ENCODE measurements at regions of chr7 and their contacts with region 1.

Region 1: GRCh38 chr7:105013221-105013815 is 687 bp upstream of the KMT2E start:
- DNase-seq: peak; percentile 95 to 97 (median 97)
- H3K4me3 ChIP-seq: peak overlapping the region; percentile 87 to 99
- H3K4me3 Mint-ChIP-seq: peak overlapping the region; percentile 94 to 100 (median 98)
- H3K27ac ChIP-seq: peak overlapping the region; percentile 100
- H3K27ac Mint-ChIP-seq: peak overlapping the region; percentile 99 to 100 (median 100)
- H3K4me1 ChIP-seq: peaks cover 56% of the 10 kb centered on the region
- H3K4me1 Mint-ChIP-seq: peaks cover 22 to 90% (median 38%) of the 10 kb centered on the region in 4 donors
- H3K27me3 ChIP-seq: no peaks in the 10 kb centered on the region
- H3K27me3 Mint-ChIP-seq: peaks cover 0 to 9% of the 10 kb centered on the region in 2 donors

Region 2: GRCh38 chr7:104943502-104944343 is 69.6 kb before region 1 on chr7:
- CTCF ChIA-PET with region 1: interaction called, 4 read pairs
- POLR2A ChIA-PET with region 1: interaction called, 118 read pairs
- intact Hi-C with region 1: loop called (anchors 1 kb)
- DNase-seq: peak; percentile 75 to 92 (median 81)
- H3K4me3 ChIP-seq: peak overlapping the region; percentile 1 to 15
- H3K4me3 Mint-ChIP-seq: peak overlapping the region; percentile 82 to 92 (median 88)
- H3K27ac ChIP-seq: peak overlapping the region; percentile 94
- H3K27ac Mint-ChIP-seq: peak overlapping the region; percentile 100
- H3K4me1 ChIP-seq: peaks cover 59% of the 10 kb centered on the region
- H3K4me1 Mint-ChIP-seq: peaks cover 45 to 71% (median 58%) of the 10 kb centered on the region in 4 donors
- H3K27me3 ChIP-seq: no peaks in the 10 kb centered on the region
- H3K27me3 Mint-ChIP-seq: peaks cover 0 to 1% of the 10 kb centered on the region in 2 donors

Region 3: GRCh38 chr7:105003275-105003674 is 10.0 kb before region 1 on chr7:
- CTCF ChIA-PET with region 1: interaction called, 8 read pairs
- POLR2A ChIA-PET with region 1: interaction called, 44 read pairs
- intact Hi-C with region 1: no loop called
- DNase-seq: peak in 1 of 5 donors; percentile 69
- H3K4me3 ChIP-seq: no peak overlapping the region
- H3K4me3 Mint-ChIP-seq: peak overlapping the region; percentile 53 to 84 (median 64)
- H3K27ac ChIP-seq: peak overlapping the region; percentile 33
- H3K27ac Mint-ChIP-seq: peak overlapping the region; percentile 80 to 93 (median 90)
- H3K4me1 ChIP-seq: peaks cover 98% of the 10 kb centered on the region
- H3K4me1 Mint-ChIP-seq: peaks cover 62 to 95% (median 78%) of the 10 kb centered on the region in 4 donors
- H3K27me3 ChIP-seq: no peaks in the 10 kb centered on the region
- H3K27me3 Mint-ChIP-seq: no peaks in the 10 kb centered on the region

Region 4: DNA sequence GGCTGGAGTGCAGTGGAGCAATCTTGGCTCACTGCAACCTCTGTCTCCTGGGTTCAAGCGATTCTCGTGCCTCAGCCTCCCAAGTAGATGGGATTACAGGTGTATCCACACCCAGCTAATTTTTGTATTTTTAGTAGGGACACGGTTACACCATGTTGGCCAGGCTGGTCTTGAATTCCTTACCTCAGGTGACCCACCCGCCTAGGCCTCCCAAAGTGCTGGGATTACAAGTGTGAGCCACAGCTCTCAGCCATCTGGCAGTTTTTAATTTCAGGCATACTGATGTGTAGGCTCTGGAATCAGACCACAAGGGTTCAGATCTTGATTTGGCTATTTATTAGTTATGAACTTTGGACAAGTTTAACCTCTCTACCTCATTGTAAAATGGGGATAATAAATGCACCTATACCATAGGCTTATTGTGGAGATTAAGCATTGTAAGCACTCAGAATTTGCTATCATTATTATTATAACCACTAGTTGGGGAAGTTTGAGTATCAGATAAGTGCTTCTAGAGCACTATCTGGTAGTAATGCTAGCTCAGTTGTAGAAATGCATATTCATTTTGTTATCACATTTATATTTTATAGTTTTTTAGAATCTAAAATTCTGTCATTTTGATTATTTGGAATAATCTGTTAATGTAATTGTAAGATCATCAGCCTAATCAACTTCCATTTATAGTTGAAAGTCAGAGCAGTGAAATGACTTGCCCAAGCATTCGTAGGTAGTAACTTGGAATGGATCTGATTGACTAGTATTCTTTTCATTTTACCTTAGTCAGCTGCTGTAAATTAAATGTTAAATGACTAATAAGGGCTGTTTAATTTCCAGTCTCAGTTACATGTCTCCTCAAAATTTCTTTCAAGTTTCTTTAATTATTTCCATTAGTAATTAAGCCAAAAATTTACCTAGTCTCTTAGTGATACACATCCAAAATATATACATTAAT is 23.2 kb after region 1 on chr7:
- CTCF ChIA-PET with region 1: interaction called, 21 read pairs
- POLR2A ChIA-PET with region 1: interaction called, 95 read pairs
- intact Hi-C with region 1: loop called (anchors 2 kb)
- DNase-seq: no peak
- H3K4me3 ChIP-seq: no peak overlapping the region
- H3K4me3 Mint-ChIP-seq: peak overlapping the region in 6 of 8 donors; percentile 29 to 66 (median 63)
- H3K27ac ChIP-seq: no peak overlapping the region
- H3K27ac Mint-ChIP-seq: peak overlapping the region in 6 of 7 donors; percentile 36 to 81 (median 49)
- H3K4me1 ChIP-seq: peaks cover 79% of the 10 kb centered on the region
- H3K4me1 Mint-ChIP-seq: peaks cover 44 to 74% (median 59%) of the 10 kb centered on the region in 4 donors
- H3K27me3 ChIP-seq: no peaks in the 10 kb centered on the region
- H3K27me3 Mint-ChIP-seq: no peaks in the 10 kb centered on the region

Region 5: GRCh38 chr7:105067691-105068090 is 54.4 kb after region 1 on chr7:
- CTCF ChIA-PET with region 1: no interaction called
- POLR2A ChIA-PET with region 1: interaction called, 4 read pairs
- intact Hi-C with region 1: loop called (anchors 2 kb)
- DNase-seq: no peak
- H3K4me3 ChIP-seq: no peak overlapping the region
- H3K4me3 Mint-ChIP-seq: no peak overlapping the region
- H3K27ac ChIP-seq: no peak overlapping the region
- H3K27ac Mint-ChIP-seq: peak overlapping the region in 4 of 7 donors; percentile 32 to 72 (median 52)
- H3K4me1 ChIP-seq: peaks cover 14% of the 10 kb centered on the region
- H3K4me1 Mint-ChIP-seq: peaks cover 14 to 31% (median 25%) of the 10 kb centered on the region in 4 donors
- H3K27me3 ChIP-seq: no peaks in the 10 kb centered on the region
- H3K27me3 Mint-ChIP-seq: no peaks in the 10 kb centered on the region

Region 6: DNA sequence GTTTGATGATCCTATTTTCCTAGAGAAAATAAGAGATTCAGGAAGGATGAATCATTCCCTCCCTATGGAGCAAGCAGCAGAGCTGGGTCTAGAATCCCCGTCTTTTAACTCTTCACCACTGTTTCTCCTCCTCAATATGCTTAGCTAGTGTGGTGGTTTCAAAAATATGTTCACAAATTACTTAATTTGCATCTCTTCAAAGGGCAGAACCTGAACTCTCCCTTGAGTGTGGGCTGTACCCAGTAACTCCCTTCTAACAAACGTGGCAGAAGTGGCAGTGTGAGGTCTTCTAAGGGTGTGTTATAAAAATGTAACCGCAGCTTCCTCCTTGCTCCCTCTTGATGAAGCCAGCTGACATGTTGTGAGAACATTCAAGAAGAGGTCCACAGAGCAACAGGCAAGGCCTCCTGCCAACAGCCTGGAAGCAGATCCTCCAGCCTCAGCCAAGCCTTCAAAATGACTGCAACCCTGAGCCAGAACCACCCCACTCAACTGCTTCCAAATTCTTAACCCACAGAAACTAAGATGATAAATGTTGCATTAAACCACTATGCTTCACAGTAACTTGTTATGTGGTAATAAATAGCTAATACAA is 338.8 kb after region 1 on chr7:
- CTCF ChIA-PET with region 1: interaction called, 5 read pairs
- POLR2A ChIA-PET with region 1: interaction called, 15 read pairs
- intact Hi-C with region 1: no loop called
- DNase-seq: peak; percentile 81 to 87 (median 82)
- H3K4me3 ChIP-seq: no peak overlapping the region
- H3K4me3 Mint-ChIP-seq: peak overlapping the region; percentile 78 to 89 (median 84)
- H3K27ac ChIP-seq: peak overlapping the region; percentile 49
- H3K27ac Mint-ChIP-seq: peak overlapping the region; percentile 80 to 97 (median 96)
- H3K4me1 ChIP-seq: peaks cover 84% of the 10 kb centered on the region
- H3K4me1 Mint-ChIP-seq: peaks cover 47 to 74% (median 59%) of the 10 kb centered on the region in 4 donors
- H3K27me3 ChIP-seq: no peaks in the 10 kb centered on the region
- H3K27me3 Mint-ChIP-seq: no peaks in the 10 kb centered on the region

Region 7: GRCh38 chr7:106022193-106022821 is 1009.0 kb after region 1 on chr7:
- CTCF ChIA-PET with region 1: no interaction called
- POLR2A ChIA-PET with region 1: interaction called, 5 read pairs
- intact Hi-C with region 1: loop called (anchors 5 kb)
- DNase-seq: peak; percentile 89 to 92 (median 91)
- H3K4me3 ChIP-seq: peak overlapping the region in 1 of 2 donors; percentile 48
- H3K4me3 Mint-ChIP-seq: peak overlapping the region; percentile 5 to 82 (median 72)
- H3K27ac ChIP-seq: peak overlapping the region; percentile 48
- H3K27ac Mint-ChIP-seq: peak overlapping the region; percentile 88 to 99 (median 98)
- H3K4me1 ChIP-seq: peaks cover 52% of the 10 kb centered on the region
- H3K4me1 Mint-ChIP-seq: peaks cover 38 to 70% (median 48%) of the 10 kb centered on the region in 4 donors
- H3K27me3 ChIP-seq: no peaks in the 10 kb centered on the region
- H3K27me3 Mint-ChIP-seq: no peaks in the 10 kb centered on the region

Measured in CD4-positive, alpha-beta memory T cell (primary cell).